Ovary (tissue), 10 donors: ENCODE measurements at regions of chr12 and their contacts with region 1.

Region 1: GRCh38 chr12:32659908-32660440 is 19.1 kb upstream of the DNM1L start:
- DNase-seq: no peak
- H3K4me3 ChIP-seq: no peak overlapping the region
- H3K27ac ChIP-seq: no peak overlapping the region
- H3K4me1 ChIP-seq: no peaks in the 10 kb centered on the region
- H3K27me3 ChIP-seq: no peaks in the 10 kb centered on the region
- CTCF ChIP-seq: no peak
- EP300 ChIP-seq: no peak
- POLR2A ChIP-seq: no peak

Region 2: DNA sequence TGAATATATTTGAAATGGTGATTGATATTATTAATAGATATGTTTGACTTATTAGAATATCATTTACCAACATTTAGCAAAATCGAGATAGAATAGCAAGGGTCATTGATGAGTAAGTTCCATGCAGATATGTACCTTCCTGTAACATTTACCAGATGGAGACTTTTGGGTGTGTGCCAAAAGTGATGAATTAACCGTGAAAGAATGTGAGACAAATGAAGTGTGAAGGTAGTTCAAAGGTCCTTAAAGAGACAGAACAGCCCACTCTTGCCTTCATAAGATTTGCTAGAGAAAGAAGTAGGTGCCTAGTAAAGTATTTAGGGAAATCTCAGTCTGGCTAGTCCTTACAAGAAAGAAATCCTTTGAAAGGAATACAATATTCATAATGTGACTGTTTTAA is 215.1 kb before region 1 on chr12:
- intact Hi-C with region 1: loop called in 2 of 4 experiments (anchors 5 to 10 kb)
- DNase-seq: no peak
- H3K4me3 ChIP-seq: no peak overlapping the region
- H3K27ac ChIP-seq: no peak overlapping the region
- H3K4me1 ChIP-seq: no peaks in the 10 kb centered on the region
- H3K27me3 ChIP-seq: no peaks in the 10 kb centered on the region
- CTCF ChIP-seq: no peak
- EP300 ChIP-seq: no peak
- POLR2A ChIP-seq: no peak

Region 3: DNA sequence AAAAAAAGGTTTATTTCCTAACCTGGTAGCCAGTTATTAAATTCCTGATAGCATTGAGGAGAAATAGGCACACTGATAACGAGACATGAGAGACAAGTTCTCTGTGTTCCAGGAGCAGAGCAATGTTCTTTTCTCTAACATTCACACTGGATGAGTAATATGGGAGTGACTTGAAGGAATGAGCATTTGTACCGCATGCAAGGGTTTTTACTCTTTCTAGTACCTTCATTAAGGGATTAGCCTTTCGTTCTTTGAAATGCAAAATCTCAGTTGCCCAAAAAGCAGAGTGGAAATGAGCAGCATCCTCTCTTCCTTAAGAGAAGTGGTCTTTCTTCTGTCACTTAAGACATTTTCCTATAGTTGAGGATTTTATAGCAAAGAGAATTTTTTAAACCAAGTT is 205.9 kb before region 1 on chr12:
- intact Hi-C with region 1: loop called in 2 of 4 experiments (anchors 5 to 10 kb)
- DNase-seq: no peak
- H3K4me3 ChIP-seq: no peak overlapping the region
- H3K27ac ChIP-seq: peak overlapping the region in 1 of 2 donors; percentile 57
- H3K4me1 ChIP-seq: no peaks in the 10 kb centered on the region
- H3K27me3 ChIP-seq: no peaks in the 10 kb centered on the region
- CTCF ChIP-seq: no peak
- EP300 ChIP-seq: no peak
- POLR2A ChIP-seq: no peak

Region 4: DNA sequence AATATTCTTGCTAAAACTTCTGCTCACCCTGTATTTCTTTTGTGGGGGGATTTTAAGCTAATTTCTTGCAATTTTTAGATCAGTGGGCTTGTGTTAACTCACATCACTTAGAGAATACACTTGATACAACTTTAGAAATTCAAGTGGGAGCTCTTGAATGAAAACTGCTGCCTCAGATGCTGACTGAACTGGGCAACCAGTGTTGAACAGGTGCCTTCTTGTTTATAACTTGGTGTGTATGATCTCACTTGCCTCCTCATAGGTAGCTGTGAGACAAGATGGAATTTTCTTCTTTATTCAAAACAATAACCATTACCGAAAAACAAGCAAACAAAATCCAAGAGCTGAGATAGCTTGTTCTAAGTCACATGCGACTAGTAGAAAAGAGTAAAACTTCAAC is 197.1 kb before region 1 on chr12:
- intact Hi-C with region 1: loop called in 1 of 4 experiments (anchors 5 kb)
- DNase-seq: no peak
- H3K4me3 ChIP-seq: no peak overlapping the region
- H3K27ac ChIP-seq: no peak overlapping the region
- H3K4me1 ChIP-seq: peaks cover 7% of the 10 kb centered on the region
- H3K27me3 ChIP-seq: no peaks in the 10 kb centered on the region
- CTCF ChIP-seq: no peak
- EP300 ChIP-seq: no peak
- POLR2A ChIP-seq: no peak